Activated CD4-positive, alpha-beta memory T cell treated with anti-CD3 and anti-CD28 coated beads for 36 hours (primary cell): ENCODE measurements at regions of chr16 and their contacts with region 1.

Region 1: DNA sequence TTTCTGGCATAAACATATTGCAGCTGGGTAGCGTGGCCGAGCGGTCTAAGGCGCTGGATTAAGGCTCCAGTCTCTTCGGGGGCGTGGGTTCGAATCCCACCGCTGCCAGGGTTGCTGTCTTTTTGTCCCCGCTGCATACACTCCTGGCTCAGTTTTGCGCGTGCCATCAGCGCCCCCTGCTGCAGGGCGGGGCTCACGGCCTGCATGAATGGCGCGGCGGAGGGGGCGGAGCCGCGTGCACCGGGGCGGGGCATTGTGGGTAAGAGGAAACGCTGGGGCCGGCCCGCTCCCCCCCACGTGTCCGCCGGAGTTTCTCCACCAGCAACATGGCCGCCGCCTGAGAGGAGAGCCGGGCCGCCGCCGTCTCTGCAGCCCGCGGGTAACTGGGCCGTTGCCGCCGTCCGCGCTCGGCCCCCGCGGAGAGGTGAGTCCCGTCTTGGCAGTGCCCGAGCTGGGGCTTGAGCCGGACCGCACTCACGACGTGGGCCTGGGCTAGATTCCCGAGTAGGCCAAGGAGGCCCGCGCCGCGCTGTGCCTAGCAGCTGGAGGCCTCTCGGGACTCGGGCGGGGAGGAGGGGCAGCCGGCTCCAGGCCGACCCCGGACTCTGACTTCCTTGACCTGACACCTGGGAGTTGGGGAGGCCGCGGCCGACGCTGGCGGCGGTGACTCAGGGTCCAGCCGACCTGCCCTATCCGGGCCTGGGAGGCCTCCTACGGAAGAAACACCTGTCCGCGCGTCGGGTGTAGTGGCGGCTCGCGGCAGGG is at the start of gene POLR3E:
- DNase-seq: peak; percentile 100
- H3K4me3 Mint-ChIP-seq: peak within 1 kb of the TSS; percentile 94
- H3K27ac Mint-ChIP-seq: peak within 1 kb of the TSS; percentile 97
- H3K4me1 Mint-ChIP-seq: peaks cover 40% of the 10 kb centered on the region
- H3K27me3 Mint-ChIP-seq: peaks cover 1% of the 10 kb centered on the region
- total RNA-seq, gene POLR3E: 75.0 to 80.3 TPM

Region 2: GRCh38 chr16:22007509-22008214 is 289.6 kb before region 1 on chr16 and contains the start of gene MOSMO:
- CTCF ChIA-PET with region 1: no interaction called
- POLR2A ChIA-PET with region 1: no interaction called
- intact Hi-C with region 1: loop called (anchors 2 kb)
- DNase-seq: peak; percentile 74
- H3K4me3 Mint-ChIP-seq: peak within 1 kb of the TSS; percentile 84
- H3K27ac Mint-ChIP-seq: peak within 1 kb of the TSS; percentile 46
- H3K4me1 Mint-ChIP-seq: peaks cover 41% of the 10 kb centered on the region
- H3K27me3 Mint-ChIP-seq: no peaks in the 10 kb centered on the region
- total RNA-seq, gene MOSMO: 8.1 to 9.6 TPM

Region 3: GRCh38 chr16:22206013-22206841 is 91.1 kb before region 1 on chr16 and contains the start of gene EEF2K:
- CTCF ChIA-PET with region 1: interaction called, 41 read pairs
- POLR2A ChIA-PET with region 1: interaction called, 28 read pairs
- intact Hi-C with region 1: loop called (anchors 1 kb)
- DNase-seq: peak; percentile 93
- H3K4me3 Mint-ChIP-seq: peak within 1 kb of the TSS; percentile 95
- H3K27ac Mint-ChIP-seq: peak within 1 kb of the TSS; percentile 87
- H3K4me1 Mint-ChIP-seq: peaks cover 30% of the 10 kb centered on the region
- H3K27me3 Mint-ChIP-seq: no peaks in the 10 kb centered on the region
- total RNA-seq, gene EEF2K: 23.0 to 24.1 TPM

Region 4: GRCh38 chr16:22240023-22240710 is 57.1 kb before region 1 on chr16:
- CTCF ChIA-PET with region 1: interaction called, 4 read pairs
- POLR2A ChIA-PET with region 1: no interaction called
- intact Hi-C with region 1: loop called (anchors 2 kb)
- DNase-seq: no peak
- H3K4me3 Mint-ChIP-seq: no peak overlapping the region
- H3K27ac Mint-ChIP-seq: peak overlapping the region; percentile 80
- H3K4me1 Mint-ChIP-seq: peaks cover 21% of the 10 kb centered on the region
- H3K27me3 Mint-ChIP-seq: no peaks in the 10 kb centered on the region

Region 5: DNA sequence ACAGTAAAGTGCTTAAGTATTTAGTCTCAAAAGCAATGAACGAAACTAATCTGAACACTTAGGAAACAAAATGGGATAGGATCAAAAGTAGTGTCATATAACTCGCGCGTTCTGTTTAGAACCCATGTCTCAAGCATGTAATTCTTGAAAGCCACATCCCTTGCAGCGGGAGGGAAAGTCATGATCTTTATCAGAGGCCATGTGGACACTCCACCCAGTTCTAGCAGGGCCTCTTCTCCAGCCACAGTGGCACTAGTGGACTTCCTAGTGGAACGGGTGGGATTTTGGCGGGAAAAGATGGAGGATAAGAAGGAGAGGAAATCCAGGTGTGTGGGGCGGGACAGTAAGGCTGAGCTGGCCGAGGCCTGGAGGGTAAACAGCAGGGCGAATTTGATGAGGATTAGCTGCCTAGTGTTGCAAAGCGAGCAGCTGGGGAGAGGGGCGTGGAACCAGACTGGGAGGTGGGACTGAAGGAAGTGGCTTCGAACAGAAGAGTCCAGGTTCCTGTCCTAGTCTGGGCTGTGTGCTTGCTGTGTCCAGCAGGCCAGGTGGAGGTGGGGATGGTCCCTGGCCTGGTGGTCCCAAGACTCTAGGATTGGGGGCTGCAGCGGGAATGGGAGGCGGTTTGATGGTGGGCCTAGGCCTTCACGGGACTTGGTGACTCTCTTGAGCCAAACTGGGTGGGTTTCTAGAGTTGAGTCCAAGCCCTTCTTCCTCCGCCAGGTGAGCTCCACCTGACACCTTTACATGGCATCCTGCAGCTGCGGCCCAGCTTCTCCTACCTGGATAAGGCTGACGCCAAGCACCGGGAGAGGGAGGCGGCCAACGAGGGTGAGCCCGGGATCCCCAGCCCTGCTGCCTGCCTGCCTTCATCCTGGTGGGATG is 15.8 kb after region 1 on chr16:
- CTCF ChIA-PET with region 1: interaction called, 14 read pairs
- POLR2A ChIA-PET with region 1: interaction called, 3 read pairs
- intact Hi-C with region 1: no loop called
- DNase-seq: no peak
- H3K4me3 Mint-ChIP-seq: no peak overlapping the region
- H3K27ac Mint-ChIP-seq: no peak overlapping the region
- H3K4me1 Mint-ChIP-seq: no peaks in the 10 kb centered on the region
- H3K27me3 Mint-ChIP-seq: no peaks in the 10 kb centered on the region

Region 6: GRCh38 chr16:22353191-22353919 is 56.1 kb after region 1 on chr16:
- CTCF ChIA-PET with region 1: interaction called, 4 read pairs
- POLR2A ChIA-PET with region 1: no interaction called
- intact Hi-C with region 1: loop called (anchors 2 kb)
- DNase-seq: no peak
- H3K4me3 Mint-ChIP-seq: peak overlapping the region; percentile 36
- H3K27ac Mint-ChIP-seq: peak overlapping the region; percentile 93
- H3K4me1 Mint-ChIP-seq: peaks cover 58% of the 10 kb centered on the region
- H3K27me3 Mint-ChIP-seq: no peaks in the 10 kb centered on the region

Region 7: DNA sequence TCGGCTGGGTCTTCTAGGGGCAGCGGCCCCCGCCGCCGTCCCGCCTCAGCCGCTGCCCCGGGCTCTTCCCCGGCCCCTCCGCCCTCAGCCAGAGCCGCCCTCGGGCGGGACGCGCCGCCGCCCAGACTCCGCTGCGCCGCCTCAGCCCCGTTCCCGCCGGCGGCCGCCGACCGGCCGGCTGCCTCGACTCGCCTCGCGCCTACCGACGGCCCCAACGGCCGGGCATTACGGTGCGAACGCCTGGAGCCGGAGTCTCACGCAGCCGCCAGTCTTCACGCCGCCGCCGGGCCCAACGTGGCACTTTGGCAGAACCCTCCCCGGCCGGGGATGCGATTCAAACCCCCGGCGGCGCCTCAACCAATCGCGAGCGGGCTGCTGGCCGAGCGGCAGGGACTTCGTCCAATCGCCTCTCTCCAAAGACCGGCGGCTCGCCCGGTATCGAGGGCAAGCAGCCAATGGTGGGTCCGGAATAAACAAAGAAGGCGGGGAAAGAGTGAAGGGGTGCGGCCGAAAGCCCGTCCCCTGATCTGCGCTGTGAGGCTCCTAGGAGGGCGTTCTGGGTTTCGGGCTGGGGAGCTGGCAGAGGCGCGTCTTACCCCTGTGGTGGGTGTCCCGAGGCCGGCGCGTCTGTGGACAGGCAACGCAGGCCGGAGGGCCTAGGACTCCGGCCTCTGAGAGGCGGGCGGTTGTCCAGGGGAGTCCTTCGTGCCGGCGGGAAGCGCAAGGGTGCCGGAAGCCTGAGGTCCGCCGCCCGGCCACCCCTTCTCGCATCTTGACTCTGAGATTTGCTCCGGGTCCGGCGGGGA is 77.2 kb after region 1 on chr16 and contains the start of gene CDR2:
- CTCF ChIA-PET with region 1: interaction called, 8 read pairs
- POLR2A ChIA-PET with region 1: interaction called, 4 read pairs
- intact Hi-C with region 1: loop called (anchors 1 kb)
- DNase-seq: peak; percentile 99
- H3K4me3 Mint-ChIP-seq: peak within 1 kb of the TSS; percentile 89
- H3K27ac Mint-ChIP-seq: peak within 1 kb of the TSS; percentile 93
- H3K4me1 Mint-ChIP-seq: peaks cover 37% of the 10 kb centered on the region
- H3K27me3 Mint-ChIP-seq: no peaks in the 10 kb centered on the region
- total RNA-seq, gene CDR2: 44.0 to 44.4 TPM